ENCODE measurements at regions of chr9 and their contacts with region 1.

Region 1: GRCh38 chr9:89602978-89603766 is 1.6 kb upstream of the GADD45G start:
- DNase-seq: peak; percentile 95
- H3K4me3 ChIP-seq: peak overlapping the region; percentile 10 to 76 (median 46)
- H3K27ac ChIP-seq: peak overlapping the region; percentile 91 to 97 (median 94)
- H3K4me1 ChIP-seq: peaks cover 16 to 37% (median 34%) of the 10 kb centered on the region in 4 donors
- H3K27me3 ChIP-seq: no peaks in the 10 kb centered on the region
- CTCF ChIP-seq: peak; percentile 87 to 94 (median 91)
- EP300 ChIP-seq: no peak
- POLR2A ChIP-seq: no peak

Region 2: GRCh38 chr9:89850601-89851268 is 247.6 kb after region 1 on chr9:
- in situ Hi-C with region 1: no loop called
- intact Hi-C with region 1: no loop called
- DNase-seq: peak; percentile 38
- H3K4me3 ChIP-seq: no peak overlapping the region
- H3K27ac ChIP-seq: no peak overlapping the region
- H3K4me1 ChIP-seq: peaks cover 0 to 5% (median 0%) of the 10 kb centered on the region in 4 donors
- H3K27me3 ChIP-seq: no peaks in the 10 kb centered on the region
- CTCF ChIP-seq: no peak
- EP300 ChIP-seq: no peak
- POLR2A ChIP-seq: no peak

Region 3: GRCh38 chr9:89891591-89892304 is 288.6 kb after region 1 on chr9:
- in situ Hi-C with region 1: no loop called
- intact Hi-C with region 1: loop called (anchors 5 kb)
- DNase-seq: peak; percentile 30
- H3K4me3 ChIP-seq: no peak overlapping the region
- H3K27ac ChIP-seq: peak overlapping the region; percentile 61 to 78 (median 68)
- H3K4me1 ChIP-seq: peaks cover 4 to 12% (median 7%) of the 10 kb centered on the region in 4 donors
- H3K27me3 ChIP-seq: no peaks in the 10 kb centered on the region
- CTCF ChIP-seq: no peak
- EP300 ChIP-seq: no peak
- POLR2A ChIP-seq: no peak

Region 4: GRCh38 chr9:89929673-89930480 is 326.7 kb after region 1 on chr9:
- in situ Hi-C with region 1: loop called in 1 of 4 experiments (anchors 10 kb)
- intact Hi-C with region 1: no loop called
- DNase-seq: no peak
- H3K4me3 ChIP-seq: no peak overlapping the region
- H3K27ac ChIP-seq: no peak overlapping the region
- H3K4me1 ChIP-seq: peaks cover 0 to 16% (median 5%) of the 10 kb centered on the region in 4 donors
- H3K27me3 ChIP-seq: no peaks in the 10 kb centered on the region
- CTCF ChIP-seq: no peak
- EP300 ChIP-seq: no peak
- POLR2A ChIP-seq: no peak

Region 5: DNA sequence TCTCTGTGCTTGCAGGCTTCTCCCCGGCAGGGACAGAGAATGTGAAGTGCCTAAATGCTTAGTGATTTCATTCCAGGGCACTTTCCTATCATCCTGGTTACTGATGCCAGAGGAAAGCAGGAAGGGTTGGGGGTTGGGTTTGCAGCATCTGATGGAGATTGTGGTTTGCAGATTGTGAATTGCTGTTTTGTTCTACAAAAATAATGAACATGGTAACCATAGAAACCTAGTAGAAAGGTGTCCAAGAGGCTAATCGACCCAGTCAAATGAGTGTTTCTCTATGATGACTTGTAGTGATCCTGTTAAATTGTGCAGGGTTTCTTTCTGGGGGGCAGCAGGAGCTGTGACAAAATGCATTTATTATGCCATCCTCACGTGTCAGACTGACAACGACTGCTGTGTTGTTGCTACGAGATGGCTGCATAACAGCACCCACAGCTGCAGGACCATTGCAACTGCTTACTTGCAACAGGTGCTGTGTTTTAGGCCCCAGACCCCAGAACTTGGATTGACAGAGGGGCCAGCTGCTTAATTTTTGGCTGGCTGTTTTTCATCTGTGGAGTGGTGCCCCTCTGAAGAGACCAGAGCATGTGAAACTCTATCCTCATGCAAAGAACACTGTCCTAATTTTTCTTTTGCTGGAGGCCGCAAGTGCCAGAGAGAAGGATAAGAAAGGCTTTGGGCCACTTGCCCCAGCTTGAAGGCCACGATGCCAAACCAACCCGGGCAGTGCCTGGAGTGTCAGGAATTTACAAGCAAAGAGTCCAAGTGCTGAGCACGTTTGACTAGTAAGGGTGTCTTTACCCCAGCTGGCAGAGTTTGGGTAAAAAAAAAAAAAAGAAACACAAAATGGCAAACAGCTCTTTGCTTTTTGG is 399.5 kb after region 1 on chr9:
- in situ Hi-C with region 1: no loop called
- intact Hi-C with region 1: loop called (anchors 2 kb)
- DNase-seq: no peak
- H3K4me3 ChIP-seq: no peak overlapping the region
- H3K27ac ChIP-seq: peak overlapping the region; percentile 10 to 40 (median 34)
- H3K4me1 ChIP-seq: peaks cover 26 to 51% (median 42%) of the 10 kb centered on the region in 4 donors
- H3K27me3 ChIP-seq: no peaks in the 10 kb centered on the region
- CTCF ChIP-seq: no peak
- EP300 ChIP-seq: no peak
- POLR2A ChIP-seq: no peak